T-cell (primary cell): ENCODE measurements at regions of chr11 and their contacts with region 1.

Region 1: GRCh38 chr11:48050313-48050703 is 69.9 kb downstream of the PTPRJ start:
- DNase-seq: no peak
- ATAC-seq: peak in 1 of 4 experiments; percentile 33
- H3K4me3 ChIP-seq: no peak overlapping the region
- H3K4me3 Mint-ChIP-seq: no peak overlapping the region
- H3K27ac ChIP-seq: no peak overlapping the region
- H3K27ac Mint-ChIP-seq: peak overlapping the region in 1 of 2 donors; percentile 50
- H3K4me1 ChIP-seq: peaks cover 26 to 68% of the 10 kb centered on the region in 2 experiments
- H3K4me1 Mint-ChIP-seq: peaks cover 64 to 72% (median 68%) of the 10 kb centered on the region in 3 donors
- H3K27me3 ChIP-seq: no peaks in the 10 kb centered on the region
- H3K27me3 Mint-ChIP-seq: no peaks in the 10 kb centered on the region

Region 2: DNA sequence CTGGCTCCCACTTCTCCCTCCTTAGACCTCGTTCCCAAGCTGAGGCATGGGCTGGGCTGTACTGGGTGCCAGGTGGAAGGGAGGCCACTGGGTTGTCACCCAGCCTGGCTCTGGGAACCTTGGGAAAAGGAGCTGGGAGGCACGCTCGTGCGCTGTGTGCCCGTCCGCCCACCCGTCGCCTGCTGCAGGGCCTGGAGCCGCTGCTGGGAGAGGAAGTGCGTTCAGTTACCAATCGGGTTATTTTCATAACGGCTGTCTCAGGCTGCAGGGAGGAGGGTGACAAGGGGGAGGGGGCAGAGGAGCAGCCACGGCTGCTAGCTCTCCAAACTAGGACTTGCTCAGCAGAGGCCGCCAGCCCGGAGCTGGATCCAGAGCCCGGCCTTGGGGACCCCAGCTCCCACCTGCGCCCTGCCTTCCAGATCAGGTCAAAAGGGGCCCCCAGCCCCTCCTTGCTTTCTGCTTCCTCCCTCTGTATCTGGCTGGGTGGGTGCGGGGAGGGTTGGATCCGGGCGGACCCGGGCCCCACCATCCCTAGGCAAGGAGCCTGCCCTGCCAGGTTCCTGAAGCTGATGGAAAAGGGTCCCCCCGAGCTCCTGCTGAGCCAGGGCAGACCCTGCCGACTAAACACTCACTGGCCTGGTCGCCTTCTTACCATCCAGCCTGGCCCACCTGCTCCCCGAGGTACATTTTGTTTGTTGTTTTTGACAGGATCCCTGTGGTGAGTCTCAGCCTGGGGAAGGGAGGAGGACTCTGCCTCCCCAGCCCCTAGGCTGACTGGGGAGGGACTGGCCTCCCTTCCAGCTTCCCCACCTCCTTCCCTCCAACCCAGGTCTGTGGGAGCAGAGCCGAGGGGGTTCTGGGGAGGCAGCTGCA is 1688.8 kb before region 1 on chr11:
- CTCF ChIA-PET with region 1: no interaction called
- POLR2A ChIA-PET with region 1: no interaction called
- DNase-seq: peak in 33 of 35 experiments; percentile 56 to 80 (median 66)
- ATAC-seq: peak; percentile 90 to 98 (median 95)
- H3K4me3 ChIP-seq: peak overlapping the region; percentile 45 to 55
- H3K4me3 Mint-ChIP-seq: peak overlapping the region; percentile 81 to 90 (median 82)
- H3K27ac ChIP-seq: peak overlapping the region; percentile 71
- H3K27ac Mint-ChIP-seq: peak overlapping the region; percentile 91 to 94
- H3K4me1 ChIP-seq: peaks cover 19 to 79% of the 10 kb centered on the region in 2 experiments
- H3K4me1 Mint-ChIP-seq: peaks cover 64 to 82% (median 74%) of the 10 kb centered on the region in 3 donors
- H3K27me3 ChIP-seq: no peaks in the 10 kb centered on the region
- H3K27me3 Mint-ChIP-seq: no peaks in the 10 kb centered on the region

Region 3: DNA sequence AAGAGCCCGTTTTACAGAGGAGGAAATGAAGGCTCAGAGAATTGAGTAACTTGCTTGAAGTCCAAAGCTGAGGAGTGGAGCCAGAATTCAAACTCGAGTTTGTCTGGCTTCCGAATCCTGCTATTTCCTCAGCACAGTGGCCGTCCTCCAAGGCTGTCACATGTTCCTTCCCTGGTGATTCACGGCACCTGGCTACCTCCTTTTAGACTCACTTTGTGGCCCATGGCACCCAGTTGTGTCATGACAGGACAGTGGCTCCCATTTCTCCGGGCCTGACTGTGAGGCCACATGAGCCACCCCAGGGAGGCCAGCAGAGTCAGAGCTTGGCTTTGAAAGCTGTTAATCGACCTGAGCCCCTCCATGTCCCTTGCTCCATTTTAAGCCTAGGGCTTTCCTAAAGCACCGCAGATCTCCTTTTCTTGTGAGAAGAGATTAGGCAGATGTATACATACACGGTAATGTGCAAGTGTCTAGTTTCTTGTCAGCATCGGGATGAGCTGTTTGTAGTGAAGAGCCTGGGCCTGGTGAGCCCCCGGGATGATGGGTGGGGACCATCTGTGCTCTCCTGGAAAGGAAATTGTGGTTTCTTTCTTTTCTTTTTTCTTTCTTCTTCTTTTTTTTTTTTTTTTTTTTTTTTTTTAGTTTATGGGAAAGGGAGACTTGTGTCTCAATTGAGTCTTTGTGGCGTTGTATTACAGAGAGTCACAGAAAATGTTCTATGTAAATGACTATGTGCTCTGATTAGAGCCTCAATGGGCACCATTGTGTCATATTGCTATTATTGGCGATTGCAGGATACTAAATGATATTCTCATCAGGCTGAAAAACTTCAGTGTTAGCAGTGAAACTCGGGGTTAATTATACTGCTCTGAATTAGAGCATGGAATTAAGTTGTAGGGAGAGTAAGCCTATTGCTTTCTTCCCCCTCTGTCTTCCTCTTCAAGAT is 15.1 kb before region 1 on chr11:
- CTCF ChIA-PET with region 1: no interaction called
- POLR2A ChIA-PET with region 1: interaction called in 1 of 2 experiments, 12 read pairs
- DNase-seq: no peak
- ATAC-seq: peak in 2 of 4 experiments; percentile 32 to 34
- H3K4me3 ChIP-seq: no peak overlapping the region
- H3K4me3 Mint-ChIP-seq: peak overlapping the region in 2 of 3 donors; percentile 0 to 45
- H3K27ac ChIP-seq: no peak overlapping the region
- H3K27ac Mint-ChIP-seq: peak overlapping the region; percentile 76 to 78
- H3K4me1 ChIP-seq: peaks cover 17 to 33% of the 10 kb centered on the region in 2 experiments
- H3K4me1 Mint-ChIP-seq: peaks cover 71 to 82% (median 80%) of the 10 kb centered on the region in 3 donors
- H3K27me3 ChIP-seq: no peaks in the 10 kb centered on the region
- H3K27me3 Mint-ChIP-seq: no peaks in the 10 kb centered on the region

Region 4: GRCh38 chr11:48116437-48117228 is 66.3 kb after region 1 on chr11:
- CTCF ChIA-PET with region 1: no interaction called
- POLR2A ChIA-PET with region 1: no interaction called
- DNase-seq: peak in 1 of 35 experiments; percentile 25
- ATAC-seq: no peak
- H3K4me3 ChIP-seq: no peak overlapping the region
- H3K4me3 Mint-ChIP-seq: no peak overlapping the region
- H3K27ac ChIP-seq: no peak overlapping the region
- H3K27ac Mint-ChIP-seq: no peak overlapping the region
- H3K4me1 ChIP-seq: no peaks in the 10 kb centered on the region
- H3K4me1 Mint-ChIP-seq: peaks cover 0 to 5% (median 0%) of the 10 kb centered on the region in 3 donors
- H3K27me3 ChIP-seq: no peaks in the 10 kb centered on the region
- H3K27me3 Mint-ChIP-seq: no peaks in the 10 kb centered on the region